ENCODE measurements at regions of chr11 and their contacts with region 1.

Region 1: DNA sequence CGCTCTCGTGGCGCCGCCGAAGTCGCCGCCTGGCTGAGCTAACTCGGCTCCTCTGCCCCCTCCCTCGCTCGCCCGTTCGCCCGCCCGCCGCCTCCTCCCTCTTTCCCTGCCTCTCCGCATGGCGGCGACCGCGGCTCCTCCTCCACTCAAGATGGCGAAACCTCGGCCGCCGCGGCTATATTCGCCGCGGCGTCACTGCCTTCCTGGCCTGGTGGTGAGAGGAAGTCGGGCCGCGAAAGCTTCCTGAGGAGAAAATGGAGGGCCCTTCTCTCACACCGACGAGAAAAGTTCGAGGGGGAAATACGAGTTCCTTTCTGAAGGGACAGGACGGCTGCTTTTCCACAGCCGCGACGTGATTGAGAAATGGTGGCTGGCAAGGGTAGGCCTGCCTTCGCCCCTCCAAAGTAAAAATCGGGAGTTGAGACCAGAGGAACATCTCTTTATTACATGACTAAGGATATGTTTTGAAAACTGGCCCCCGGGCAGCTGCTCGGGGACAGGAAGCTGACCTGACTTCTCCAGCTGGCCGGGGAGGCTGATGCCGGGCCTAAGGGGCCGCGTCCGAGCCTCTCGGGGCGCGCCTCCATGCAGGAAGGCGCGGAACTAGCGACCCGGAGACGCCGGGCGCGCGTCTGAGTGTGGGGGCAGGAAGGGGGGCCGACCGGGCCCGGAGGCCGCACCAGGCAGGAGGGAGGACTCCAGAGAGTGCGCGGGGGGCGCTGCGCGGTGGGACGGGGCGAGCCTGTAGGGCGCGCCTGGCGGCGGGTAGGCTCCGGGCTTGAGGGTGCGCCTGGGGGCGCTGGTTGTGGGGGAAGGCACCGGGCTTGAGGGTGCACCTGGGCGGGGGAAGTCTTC is at the start of gene DDX6:
- DNase-seq: peak; percentile 58
- H3K4me3 ChIP-seq: peak within 1 kb of the TSS; percentile 91
- H3K27ac ChIP-seq: peak within 1 kb of the TSS; percentile 97
- H3K27me3 ChIP-seq: no peaks in the 10 kb centered on the region
- CTCF ChIP-seq: peak; percentile 39
- polyA plus RNA-seq, gene DDX6: 68.8 and 81.8 TPM in 2 replicates

Region 2: DNA sequence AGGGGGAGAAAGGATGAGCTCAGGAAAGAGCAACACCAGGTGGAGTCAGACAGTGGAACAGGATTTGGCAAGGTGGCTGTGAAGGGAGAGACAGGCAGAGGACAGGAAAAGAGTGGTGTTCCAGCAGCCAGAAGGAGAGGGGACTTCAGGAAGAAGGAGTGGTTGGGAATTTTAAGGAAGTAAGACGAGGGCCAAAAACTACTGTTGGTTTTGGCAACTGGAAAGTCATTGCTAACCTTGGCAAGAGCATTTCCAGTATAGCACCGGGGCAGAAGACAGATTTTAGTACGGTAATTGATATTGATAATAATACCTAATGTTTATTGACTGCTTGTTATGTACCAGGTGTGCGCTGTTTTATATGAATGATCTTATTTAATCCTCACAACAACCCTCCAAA is 15.1 kb after region 1 on chr11:
- CTCF ChIA-PET with region 1: no interaction called
- POLR2A ChIA-PET with region 1: no interaction called
- DNase-seq: no peak
- H3K4me3 ChIP-seq: no peak overlapping the region
- H3K27ac ChIP-seq: no peak overlapping the region
- H3K27me3 ChIP-seq: peaks cover 23% of the 10 kb centered on the region
- CTCF ChIP-seq: no peak

Region 3: GRCh38 chr11:118834427-118835028 is 43.2 kb after region 1 on chr11:
- CTCF ChIA-PET with region 1: interaction called, 10 read pairs
- POLR2A ChIA-PET with region 1: no interaction called
- DNase-seq: no peak
- H3K4me3 ChIP-seq: no peak overlapping the region
- H3K27ac ChIP-seq: no peak overlapping the region
- H3K27me3 ChIP-seq: peaks cover 10% of the 10 kb centered on the region
- CTCF ChIP-seq: no peak

Region 4: DNA sequence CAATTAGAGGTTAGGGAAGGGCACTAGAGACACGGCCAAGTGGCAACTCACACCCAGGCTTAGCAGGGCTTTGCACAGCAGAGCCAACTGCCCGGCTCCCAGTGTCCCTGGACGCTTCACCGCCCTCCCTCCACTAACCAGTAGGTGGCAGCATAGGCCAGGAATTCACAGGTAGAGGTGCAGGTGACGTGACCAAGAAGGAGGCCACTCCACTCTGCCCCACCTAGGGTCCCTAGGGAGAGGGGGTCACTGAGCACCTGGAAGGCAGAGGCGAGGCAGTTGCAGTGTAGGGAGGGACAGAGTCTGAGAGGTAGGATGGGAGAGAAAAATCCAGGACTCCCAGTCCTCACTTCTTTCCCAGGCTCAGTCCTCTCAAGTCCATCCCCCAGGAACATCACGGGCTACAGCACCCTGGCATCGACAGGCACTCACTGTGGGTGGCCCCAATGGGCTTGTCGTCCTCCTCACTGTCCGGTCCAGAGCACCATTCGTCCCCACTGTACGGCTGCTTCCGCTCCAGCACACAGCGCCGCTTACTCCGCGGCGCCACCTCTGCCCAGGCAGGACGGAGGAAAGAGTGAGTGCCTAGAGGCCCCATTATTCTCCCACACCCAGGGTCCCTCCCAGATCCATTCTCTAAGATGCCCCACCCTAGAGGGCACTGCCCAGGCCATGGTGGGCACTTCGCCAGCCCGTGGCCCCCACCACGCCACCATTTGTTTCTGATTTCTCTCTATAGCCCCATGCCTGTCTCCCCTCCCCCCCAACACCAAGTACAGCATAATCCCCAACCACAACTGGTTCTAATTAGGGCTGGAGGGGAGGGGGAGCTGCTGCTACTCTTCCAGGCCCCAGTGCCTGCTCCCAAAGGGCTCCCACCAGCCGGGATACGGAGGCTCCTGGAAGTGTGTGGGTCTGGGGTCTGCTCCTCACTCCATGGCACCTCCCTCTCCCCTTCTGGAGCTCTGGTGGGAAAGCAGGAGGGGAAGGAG is 116.0 kb after region 1 on chr11:
- CTCF ChIA-PET with region 1: no interaction called
- POLR2A ChIA-PET with region 1: interaction called, 22 read pairs
- DNase-seq: no peak
- H3K4me3 ChIP-seq: peak overlapping the region; percentile 10; the same call in 1 of the 2 replicates
- H3K27ac ChIP-seq: peak overlapping the region; percentile 31
- H3K27me3 ChIP-seq: no peaks in the 10 kb centered on the region
- CTCF ChIP-seq: peak; percentile 88